ENCODE measurements at regions of chr7 and their contacts with region 1.

Region 1: DNA sequence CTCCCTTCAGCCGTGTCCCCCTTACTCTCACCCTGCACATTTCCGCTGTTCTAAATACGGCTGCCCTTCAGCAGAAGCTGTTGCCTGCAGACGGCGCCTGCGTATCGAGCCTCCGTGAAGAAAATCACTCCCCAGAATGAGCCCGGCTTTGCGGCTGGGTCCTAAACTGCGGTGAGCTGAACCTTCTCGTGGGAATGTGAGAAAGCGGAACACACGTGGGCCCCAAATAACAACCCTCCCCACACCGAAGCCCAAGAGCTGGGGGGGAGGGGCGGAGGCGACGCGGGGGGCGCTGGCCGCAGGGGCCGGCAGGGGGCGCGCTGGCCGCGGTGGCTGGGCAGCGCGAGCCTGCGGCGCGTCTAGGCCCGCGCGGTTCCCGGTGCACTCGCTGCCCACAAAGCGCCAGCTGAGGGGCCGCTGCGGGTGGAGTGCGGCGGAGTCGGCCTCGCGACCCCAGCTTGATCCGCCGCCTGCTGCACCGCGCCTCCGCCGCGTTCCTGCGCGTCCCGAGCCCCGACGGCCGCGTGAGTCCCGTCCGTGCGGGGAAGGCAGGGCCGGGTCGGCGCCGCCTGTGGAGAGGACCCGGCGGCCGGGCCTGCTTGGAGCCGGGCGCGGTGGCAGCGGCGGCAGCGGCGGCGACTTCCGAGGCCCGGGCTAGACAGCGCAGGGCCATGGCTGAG is at the start of gene ZNF398:
- DNase-seq: peak; percentile 77 to 91 (median 85)
- ATAC-seq: peak; percentile 92
- H3K4me3 ChIP-seq: peak within 1 kb of the TSS; percentile 98
- H3K4me3 Mint-ChIP-seq: peak within 1 kb of the TSS; percentile 88 to 98 (median 93)
- H3K27ac ChIP-seq: peak within 1 kb of the TSS; percentile 86
- H3K27ac Mint-ChIP-seq: peak within 1 kb of the TSS; percentile 90 to 98 (median 95)
- H3K4me1 ChIP-seq: peaks cover 8 to 23% of the 10 kb centered on the region in 2 donors
- H3K4me1 Mint-ChIP-seq: peaks cover 24 to 52% (median 42%) of the 10 kb centered on the region in 7 donors
- H3K27me3 ChIP-seq: no peaks in the 10 kb centered on the region
- H3K27me3 Mint-ChIP-seq: no peaks in the 10 kb centered on the region
- total RNA-seq, gene ZNF398: 14.6 to 27.9 (median 16.9) TPM

Region 2: GRCh38 chr7:148987010-148987750 is 160.0 kb before region 1 on chr7:
- CTCF ChIA-PET with region 1: no interaction called
- POLR2A ChIA-PET with region 1: no interaction called
- intact Hi-C with region 1: loop called in 1 of 2 experiments (anchors 1 kb)
- DNase-seq: peak; percentile 43 to 91 (median 88)
- ATAC-seq: peak; percentile 87
- H3K4me3 ChIP-seq: peak overlapping the region; percentile 97
- H3K4me3 Mint-ChIP-seq: peak overlapping the region; percentile 92 to 99 (median 98)
- H3K27ac ChIP-seq: peak overlapping the region; percentile 85
- H3K27ac Mint-ChIP-seq: peak overlapping the region; percentile 90 to 97 (median 96)
- H3K4me1 ChIP-seq: peaks cover 26% of the 10 kb centered on the region in 2 donors
- H3K4me1 Mint-ChIP-seq: peaks cover 26 to 53% (median 48%) of the 10 kb centered on the region in 7 donors
- H3K27me3 ChIP-seq: no peaks in the 10 kb centered on the region
- H3K27me3 Mint-ChIP-seq: peaks cover 0 to 27% (median 0%) of the 10 kb centered on the region in 5 donors

Region 3: GRCh38 chr7:149084407-149084806 is 62.8 kb before region 1 on chr7:
- CTCF ChIA-PET with region 1: no interaction called
- POLR2A ChIA-PET with region 1: no interaction called
- intact Hi-C with region 1: no loop called
- DNase-seq: no peak
- ATAC-seq: no peak
- H3K4me3 ChIP-seq: no peak overlapping the region
- H3K4me3 Mint-ChIP-seq: no peak overlapping the region
- H3K27ac ChIP-seq: no peak overlapping the region
- H3K27ac Mint-ChIP-seq: no peak overlapping the region
- H3K4me1 ChIP-seq: peaks cover 2 to 4% of the 10 kb centered on the region in 2 donors
- H3K4me1 Mint-ChIP-seq: peaks cover 8 to 55% (median 38%) of the 10 kb centered on the region in 7 donors
- H3K27me3 ChIP-seq: no peaks in the 10 kb centered on the region
- H3K27me3 Mint-ChIP-seq: no peaks in the 10 kb centered on the region

Region 4: GRCh38 chr7:149133028-149133705 is 14.0 kb before region 1 on chr7:
- CTCF ChIA-PET with region 1: interaction called, 3 read pairs
- POLR2A ChIA-PET with region 1: interaction called, 29 read pairs
- intact Hi-C with region 1: no loop called
- DNase-seq: no peak
- ATAC-seq: no peak
- H3K4me3 ChIP-seq: no peak overlapping the region
- H3K4me3 Mint-ChIP-seq: no peak overlapping the region
- H3K27ac ChIP-seq: no peak overlapping the region
- H3K27ac Mint-ChIP-seq: no peak overlapping the region
- H3K4me1 ChIP-seq: no peaks in the 10 kb centered on the region
- H3K4me1 Mint-ChIP-seq: peaks cover 0 to 4% (median 2%) of the 10 kb centered on the region in 7 donors
- H3K27me3 ChIP-seq: no peaks in the 10 kb centered on the region
- H3K27me3 Mint-ChIP-seq: no peaks in the 10 kb centered on the region

Region 5: GRCh38 chr7:149261829-149262617 is 114.8 kb after region 1 on chr7 and contains the start of gene ZNF783:
- CTCF ChIA-PET with region 1: interaction called, 4 read pairs
- POLR2A ChIA-PET with region 1: no interaction called
- intact Hi-C with region 1: loop called in 1 of 2 experiments (anchors 2 kb)
- DNase-seq: peak; percentile 77 to 88 (median 86)
- ATAC-seq: peak; percentile 97
- H3K4me3 ChIP-seq: peak within 1 kb of the TSS; percentile 74
- H3K4me3 Mint-ChIP-seq: peak within 1 kb of the TSS; percentile 83 to 91 (median 88)
- H3K27ac ChIP-seq: peak within 1 kb of the TSS; percentile 71
- H3K27ac Mint-ChIP-seq: peak within 1 kb of the TSS; percentile 84 to 93 (median 90)
- H3K4me1 ChIP-seq: peaks cover 19 to 20% of the 10 kb centered on the region in 2 donors
- H3K4me1 Mint-ChIP-seq: peaks cover 22 to 46% (median 32%) of the 10 kb centered on the region in 7 donors
- H3K27me3 ChIP-seq: no peaks in the 10 kb centered on the region
- H3K27me3 Mint-ChIP-seq: no peaks in the 10 kb centered on the region
- total RNA-seq, gene ZNF783: 23.3 to 49.2 (median 36.0) TPM

Region 6: DNA sequence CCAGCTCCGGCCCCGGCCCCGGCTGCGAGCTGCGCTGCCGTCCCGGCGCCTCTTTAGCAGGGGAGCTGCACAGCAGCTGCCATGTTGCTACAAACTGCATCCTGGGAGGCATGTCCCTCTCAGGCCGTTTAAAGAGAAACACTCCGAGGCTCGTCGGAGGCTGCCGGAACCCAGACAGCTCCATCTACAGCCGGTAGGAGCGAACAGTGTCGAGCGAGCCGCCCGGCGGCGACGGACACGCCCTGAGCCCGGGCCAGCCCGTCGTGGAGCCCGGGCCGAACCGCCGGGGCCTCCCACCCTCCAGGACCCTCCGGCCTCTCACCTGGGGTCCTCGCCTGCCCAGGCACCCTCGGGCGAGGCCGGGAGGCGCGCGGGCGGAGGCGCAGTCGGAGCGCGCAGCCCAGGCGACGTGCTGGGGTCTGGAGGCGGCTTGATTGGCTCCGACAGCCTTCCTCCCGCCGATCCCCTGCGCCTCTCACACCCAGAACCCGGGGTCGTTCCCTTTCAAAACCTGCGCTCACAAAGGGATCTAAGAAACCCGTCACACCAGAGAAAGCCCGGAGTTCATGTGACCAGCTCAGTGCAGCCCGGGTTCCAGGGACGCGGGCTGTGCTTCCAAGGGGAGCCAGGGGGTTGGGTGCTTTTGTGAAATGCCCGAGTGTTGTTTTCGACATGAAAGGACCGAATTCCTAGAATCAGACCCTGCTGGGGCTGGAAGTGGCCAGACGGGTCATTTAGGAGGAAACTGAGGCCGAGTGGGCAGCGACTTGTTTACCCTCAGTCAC is 313.5 kb after region 1 on chr7 and contains the start of gene ZNF777:
- CTCF ChIA-PET with region 1: no interaction called
- POLR2A ChIA-PET with region 1: no interaction called
- intact Hi-C with region 1: loop called (anchors 1 to 5 kb)
- DNase-seq: peak; percentile 65 to 84 (median 80)
- ATAC-seq: peak; percentile 99
- H3K4me3 ChIP-seq: peak within 1 kb of the TSS; percentile 80
- H3K4me3 Mint-ChIP-seq: peak within 1 kb of the TSS; percentile 78 to 91 (median 87)
- H3K27ac ChIP-seq: peak within 1 kb of the TSS; percentile 72
- H3K27ac Mint-ChIP-seq: peak within 1 kb of the TSS; percentile 28 to 89 (median 76)
- H3K4me1 ChIP-seq: peaks cover 4 to 16% of the 10 kb centered on the region in 2 donors
- H3K4me1 Mint-ChIP-seq: peaks cover 13 to 46% (median 35%) of the 10 kb centered on the region in 7 donors
- H3K27me3 ChIP-seq: no peaks in the 10 kb centered on the region
- H3K27me3 Mint-ChIP-seq: peaks cover 4 to 29% (median 10%) of the 10 kb centered on the region in 5 donors
- total RNA-seq, gene ZNF777: 11.2 to 16.1 (median 14.3) TPM

Measured in naive thymus-derived CD4-positive, alpha-beta T cell (primary cell).